CD8-positive, alpha-beta T cell (primary cell): ENCODE measurements at regions of chr14 and their contacts with region 1.

Region 1: DNA sequence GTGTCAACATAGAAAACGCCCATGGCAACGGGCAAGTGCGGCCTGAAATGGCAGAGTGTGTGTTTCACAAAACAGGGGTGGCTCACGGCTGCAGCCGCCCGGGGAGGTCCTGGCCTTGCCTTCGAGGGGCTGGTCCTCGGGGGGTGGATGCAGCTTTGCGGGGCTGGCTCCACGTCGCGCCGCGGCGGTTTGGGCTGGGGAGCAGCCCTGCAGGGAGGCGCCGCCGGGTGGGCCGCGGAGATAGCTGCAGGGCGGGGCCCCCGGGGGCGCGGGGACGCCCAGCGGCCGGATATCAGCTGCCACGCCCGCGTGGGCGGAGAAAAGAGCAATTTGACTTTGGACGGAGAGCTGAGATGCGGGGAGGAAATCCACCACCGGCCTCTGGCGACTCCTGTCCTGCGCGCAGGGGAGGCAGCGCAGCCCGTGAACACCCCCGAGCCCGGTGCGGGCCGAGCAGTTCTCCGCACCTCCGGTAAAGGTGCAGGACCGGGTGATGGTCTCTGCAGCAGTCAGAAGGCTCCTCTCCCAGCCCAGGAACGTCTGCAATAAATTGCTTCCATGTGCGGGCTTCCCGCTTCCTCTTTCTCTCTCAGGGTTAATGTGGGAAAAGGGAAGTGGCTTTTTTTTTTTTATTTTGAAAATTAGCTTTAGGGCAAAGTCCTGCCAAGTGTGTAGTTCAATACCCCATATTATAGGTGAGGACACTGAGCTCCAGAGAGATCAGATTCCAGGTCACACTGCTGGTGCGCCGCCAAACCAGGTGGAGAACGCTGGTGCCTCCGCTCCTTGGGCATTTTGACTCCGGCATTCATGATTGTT is 110.5 kb downstream of the ARF6 start:
- DNase-seq: peak; percentile 57 to 92 (median 77)
- ATAC-seq: peak; percentile 14
- H3K4me3 ChIP-seq: peak overlapping the region; percentile 44 to 56
- H3K4me3 Mint-ChIP-seq: peak overlapping the region; percentile 90
- H3K27ac ChIP-seq: peak overlapping the region; percentile 93 to 96
- H3K27ac Mint-ChIP-seq: peak overlapping the region; percentile 97
- H3K4me1 ChIP-seq: peaks cover 51% of the 10 kb centered on the region
- H3K4me1 Mint-ChIP-seq: peaks cover 56% of the 10 kb centered on the region
- H3K27me3 ChIP-seq: no peaks in the 10 kb centered on the region
- H3K27me3 Mint-ChIP-seq: no peaks in the 10 kb centered on the region
- CTCF ChIP-seq: peak; percentile 35

Region 2: GRCh38 chr14:49405291-49405690 is 598.1 kb before region 1 on chr14:
- CTCF ChIA-PET with region 1: no interaction called
- POLR2A ChIA-PET with region 1: no interaction called
- intact Hi-C with region 1: no loop called
- DNase-seq: no peak
- ATAC-seq: no peak
- H3K4me3 ChIP-seq: no peak overlapping the region
- H3K4me3 Mint-ChIP-seq: no peak overlapping the region
- H3K27ac ChIP-seq: no peak overlapping the region
- H3K27ac Mint-ChIP-seq: no peak overlapping the region
- H3K4me1 ChIP-seq: no peaks in the 10 kb centered on the region
- H3K4me1 Mint-ChIP-seq: no peaks in the 10 kb centered on the region
- H3K27me3 ChIP-seq: peaks cover 0 to 2% of the 10 kb centered on the region in 2 experiments
- H3K27me3 Mint-ChIP-seq: peaks cover 17% of the 10 kb centered on the region
- CTCF ChIP-seq: no peak

Region 3: DNA sequence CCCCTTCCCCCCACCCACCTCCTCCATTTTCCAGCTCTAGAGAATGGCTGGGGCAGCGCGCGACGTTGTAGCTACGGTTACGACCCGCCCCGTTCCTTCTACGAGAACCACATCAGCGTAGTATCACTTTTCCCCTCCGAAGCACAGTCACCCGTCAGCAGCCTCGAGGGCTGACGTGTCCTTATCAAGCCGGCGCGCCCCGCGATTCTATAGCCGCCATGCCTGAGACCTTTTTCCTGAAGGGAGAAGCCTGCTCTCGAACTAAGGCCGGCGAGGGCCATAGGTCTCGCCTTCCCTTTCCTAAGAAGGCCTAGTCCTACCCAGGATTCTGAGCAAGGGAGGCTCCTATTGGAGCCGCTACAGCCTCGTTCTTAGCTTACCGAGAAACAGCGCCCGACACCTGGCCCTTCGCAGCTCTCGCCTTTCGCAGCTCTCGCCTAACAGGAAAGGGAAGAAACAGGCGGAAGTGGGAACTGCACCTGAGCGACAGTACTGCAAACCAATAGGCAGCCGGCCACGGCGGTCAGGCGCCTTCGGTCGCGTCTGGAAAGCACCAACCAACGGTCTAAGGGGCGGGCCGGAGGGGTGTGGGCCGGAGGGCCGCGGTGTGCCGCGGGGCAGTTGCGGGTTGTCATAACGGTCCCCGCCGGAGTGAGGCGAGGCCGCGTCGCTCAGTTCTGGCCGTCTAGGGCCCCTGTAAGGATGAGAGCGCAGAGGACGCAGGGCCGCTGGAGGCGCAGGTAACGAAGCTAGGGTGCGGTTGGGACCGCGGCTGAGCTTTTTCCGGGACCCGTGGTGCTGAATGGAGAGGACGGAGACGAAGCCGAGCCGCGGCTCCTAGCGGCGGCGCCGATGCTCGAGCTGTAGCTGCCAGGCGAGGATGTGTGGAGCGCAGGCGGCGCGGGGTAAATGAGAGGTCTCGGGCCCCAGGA is 383.0 kb before region 1 on chr14 and contains the starts of genes MGAT2 and RPL36AL:
- CTCF ChIA-PET with region 1: no interaction called
- POLR2A ChIA-PET with region 1: no interaction called
- intact Hi-C with region 1: loop called in 1 of 2 experiments (anchors 5 kb)
- DNase-seq: peak; percentile 85 to 97 (median 93)
- ATAC-seq: peak; percentile 79
- H3K4me3 ChIP-seq: peak within 1 kb of the TSS; percentile 94 to 95
- H3K4me3 Mint-ChIP-seq: peak within 1 kb of the TSS; percentile 97
- H3K27ac ChIP-seq: peak within 1 kb of the TSS; percentile 98 to 99
- H3K27ac Mint-ChIP-seq: peak within 1 kb of the TSS; percentile 100
- H3K4me1 ChIP-seq: peaks cover 40% of the 10 kb centered on the region
- H3K4me1 Mint-ChIP-seq: peaks cover 62% of the 10 kb centered on the region
- H3K27me3 ChIP-seq: no peaks in the 10 kb centered on the region
- H3K27me3 Mint-ChIP-seq: no peaks in the 10 kb centered on the region
- CTCF ChIP-seq: no peak
- total RNA-seq, gene MGAT2: 22.6 to 24.0 TPM
- total RNA-seq, gene RPL36AL: 302 to 318 TPM

Region 4: DNA sequence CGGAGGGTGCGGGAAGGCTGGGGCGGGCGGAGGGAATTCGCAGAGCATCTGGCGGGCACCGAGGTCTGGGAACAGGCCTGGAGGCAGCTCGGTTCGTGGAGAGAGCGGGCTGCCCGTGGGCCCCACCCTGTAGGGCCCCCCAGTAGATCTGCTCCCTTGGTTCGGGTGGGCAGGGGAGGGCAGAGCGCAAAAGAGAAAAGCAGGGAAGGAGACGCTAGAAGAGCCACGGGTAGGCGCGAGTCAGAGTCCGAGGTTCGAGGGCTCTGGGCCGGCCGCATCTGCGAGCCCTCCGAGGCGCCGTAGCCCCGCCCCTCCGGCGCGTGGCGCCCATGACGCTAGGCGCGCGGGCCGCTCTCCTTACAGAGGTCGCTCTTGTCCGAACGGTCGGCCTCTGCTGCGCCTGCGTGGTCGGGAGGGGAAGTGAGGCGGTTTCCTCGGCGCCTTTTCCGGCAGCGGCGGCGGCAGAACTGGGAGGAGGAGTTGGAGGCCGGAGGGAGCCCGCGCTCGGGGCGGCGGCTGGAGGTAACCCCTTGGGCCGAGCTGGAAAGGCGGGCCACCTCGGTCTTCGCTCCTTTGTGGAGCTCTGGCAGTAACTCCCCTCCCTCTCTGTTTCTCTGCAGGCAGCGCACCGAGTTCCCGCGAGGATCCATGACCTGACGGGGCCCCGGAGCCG is 110.7 kb before region 1 on chr14 and contains the start of gene ARF6:
- CTCF ChIA-PET with region 1: interaction called, 8 read pairs
- POLR2A ChIA-PET with region 1: interaction called, 51 read pairs
- intact Hi-C with region 1: loop called (anchors 1 to 2 kb)
- DNase-seq: peak; percentile 90 to 98 (median 97)
- ATAC-seq: peak; percentile 76
- H3K4me3 ChIP-seq: peak within 1 kb of the TSS; percentile 87 to 92
- H3K4me3 Mint-ChIP-seq: peak within 1 kb of the TSS; percentile 97
- H3K27ac ChIP-seq: peak within 1 kb of the TSS; percentile 98 to 99
- H3K27ac Mint-ChIP-seq: peak within 1 kb of the TSS; percentile 98
- H3K4me1 ChIP-seq: peaks cover 27% of the 10 kb centered on the region
- H3K4me1 Mint-ChIP-seq: peaks cover 30% of the 10 kb centered on the region
- H3K27me3 ChIP-seq: no peaks in the 10 kb centered on the region
- H3K27me3 Mint-ChIP-seq: no peaks in the 10 kb centered on the region
- CTCF ChIP-seq: no peak
- total RNA-seq, gene ARF6: 60.9 to 62.5 TPM

Region 5: DNA sequence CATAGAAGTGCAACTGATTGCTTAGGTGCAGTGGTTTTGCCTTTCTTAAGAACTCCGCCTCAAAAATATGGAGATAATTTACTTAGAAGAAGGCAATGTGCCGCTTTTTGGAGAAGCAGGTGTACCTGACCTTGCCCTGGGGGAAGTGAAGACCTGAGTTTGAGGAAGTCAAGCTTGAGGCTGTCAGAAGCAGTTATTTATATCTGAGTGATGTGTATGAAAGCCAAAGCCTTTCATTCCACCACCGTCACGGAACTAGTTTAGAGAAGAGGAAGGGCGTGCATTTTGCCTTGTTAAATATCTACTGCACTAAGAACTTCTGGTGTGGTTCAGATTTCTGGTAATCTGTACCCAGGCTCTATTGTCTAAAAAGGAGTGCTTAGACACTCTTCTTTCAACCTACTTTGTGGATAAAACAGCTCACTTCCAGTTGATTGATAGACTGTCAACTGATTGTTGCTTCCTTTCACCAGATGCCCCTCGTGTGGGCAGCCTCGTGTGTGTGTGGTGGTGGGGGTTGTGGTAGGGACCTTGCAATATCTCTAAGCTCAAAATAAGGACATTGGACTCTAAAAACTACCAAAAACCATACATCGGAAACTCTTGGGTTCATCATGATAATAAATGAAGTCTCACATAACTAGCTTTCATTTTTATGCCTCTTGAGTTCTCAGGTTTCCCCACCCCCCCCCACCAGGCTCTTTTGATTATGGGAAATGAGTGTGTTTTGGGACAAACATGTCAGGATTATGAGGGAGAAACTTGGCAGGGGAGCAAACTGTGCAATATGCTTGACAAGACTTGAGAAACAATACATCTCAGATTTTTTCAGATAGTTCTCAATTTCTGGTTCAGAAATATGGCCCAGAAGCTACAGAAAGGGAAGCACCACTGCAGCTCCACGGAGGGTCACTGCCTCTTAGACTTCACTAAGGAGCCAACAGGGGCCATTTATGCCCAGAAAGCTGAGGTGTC is 32.0 kb before region 1 on chr14:
- CTCF ChIA-PET with region 1: interaction called, 23 read pairs
- POLR2A ChIA-PET with region 1: interaction called, 37 read pairs
- intact Hi-C with region 1: loop called (anchors 1 kb)
- DNase-seq: peak in 8 of 9 experiments; percentile 31 to 83 (median 61)
- ATAC-seq: peak; percentile 84
- H3K4me3 ChIP-seq: peak overlapping the region; percentile 25 to 31
- H3K4me3 Mint-ChIP-seq: peak overlapping the region; percentile 78
- H3K27ac ChIP-seq: peak overlapping the region; percentile 62 to 87
- H3K27ac Mint-ChIP-seq: peak overlapping the region; percentile 98
- H3K4me1 ChIP-seq: peaks cover 41% of the 10 kb centered on the region
- H3K4me1 Mint-ChIP-seq: peaks cover 60% of the 10 kb centered on the region
- H3K27me3 ChIP-seq: no peaks in the 10 kb centered on the region
- H3K27me3 Mint-ChIP-seq: no peaks in the 10 kb centered on the region
- CTCF ChIP-seq: no peak

Region 6: GRCh38 chr14:50060871-50061663 is 57.6 kb after region 1 on chr14:
- CTCF ChIA-PET with region 1: interaction called, 11 read pairs
- POLR2A ChIA-PET with region 1: interaction called, 55 read pairs
- intact Hi-C with region 1: loop called (anchors 1 to 2 kb)
- DNase-seq: peak in 6 of 9 experiments; percentile 35 to 81 (median 58)
- ATAC-seq: no peak
- H3K4me3 ChIP-seq: peak overlapping the region; percentile 36 to 44
- H3K4me3 Mint-ChIP-seq: peak overlapping the region; percentile 81
- H3K27ac ChIP-seq: peak overlapping the region; percentile 82 to 93
- H3K27ac Mint-ChIP-seq: peak overlapping the region; percentile 99
- H3K4me1 ChIP-seq: peaks cover 63% of the 10 kb centered on the region
- H3K4me1 Mint-ChIP-seq: peaks cover 85% of the 10 kb centered on the region
- H3K27me3 ChIP-seq: no peaks in the 10 kb centered on the region
- H3K27me3 Mint-ChIP-seq: no peaks in the 10 kb centered on the region
- CTCF ChIP-seq: no peak

Region 7: GRCh38 chr14:50109342-50109741 is 105.9 kb after region 1 on chr14:
- CTCF ChIA-PET with region 1: interaction called, 12 read pairs
- POLR2A ChIA-PET with region 1: interaction called, 12 read pairs
- intact Hi-C with region 1: loop called (anchors 2 kb)
- DNase-seq: no peak
- ATAC-seq: no peak
- H3K4me3 ChIP-seq: no peak overlapping the region
- H3K4me3 Mint-ChIP-seq: no peak overlapping the region
- H3K27ac ChIP-seq: no peak overlapping the region
- H3K27ac Mint-ChIP-seq: no peak overlapping the region
- H3K4me1 ChIP-seq: peaks cover 1% of the 10 kb centered on the region
- H3K4me1 Mint-ChIP-seq: peaks cover 20% of the 10 kb centered on the region
- H3K27me3 ChIP-seq: no peaks in the 10 kb centered on the region
- H3K27me3 Mint-ChIP-seq: no peaks in the 10 kb centered on the region
- CTCF ChIP-seq: no peak